Activated CD4-positive, alpha-beta memory T cell treated with anti-CD3 and anti-CD28 coated beads for 36 hours (primary cell): ENCODE measurements at regions of chr9 and their contacts with region 1.

Region 1: GRCh38 chr9:109440797-109441287 is 57.3 kb downstream of the PTPN3 start:
- DNase-seq: peak; percentile 63
- H3K4me3 Mint-ChIP-seq: no peak overlapping the region
- H3K27ac Mint-ChIP-seq: no peak overlapping the region
- H3K4me1 Mint-ChIP-seq: peaks cover 15% of the 10 kb centered on the region
- H3K27me3 Mint-ChIP-seq: peaks cover 8% of the 10 kb centered on the region

Region 2: GRCh38 chr9:109459423-109459822 is 18.6 kb after region 1 on chr9:
- CTCF ChIA-PET with region 1: interaction called, 11 read pairs
- POLR2A ChIA-PET with region 1: no interaction called
- intact Hi-C with region 1: no loop called
- DNase-seq: no peak
- H3K4me3 Mint-ChIP-seq: no peak overlapping the region
- H3K27ac Mint-ChIP-seq: no peak overlapping the region
- H3K4me1 Mint-ChIP-seq: peaks cover 2% of the 10 kb centered on the region
- H3K27me3 Mint-ChIP-seq: peaks cover 23% of the 10 kb centered on the region

Region 3: DNA sequence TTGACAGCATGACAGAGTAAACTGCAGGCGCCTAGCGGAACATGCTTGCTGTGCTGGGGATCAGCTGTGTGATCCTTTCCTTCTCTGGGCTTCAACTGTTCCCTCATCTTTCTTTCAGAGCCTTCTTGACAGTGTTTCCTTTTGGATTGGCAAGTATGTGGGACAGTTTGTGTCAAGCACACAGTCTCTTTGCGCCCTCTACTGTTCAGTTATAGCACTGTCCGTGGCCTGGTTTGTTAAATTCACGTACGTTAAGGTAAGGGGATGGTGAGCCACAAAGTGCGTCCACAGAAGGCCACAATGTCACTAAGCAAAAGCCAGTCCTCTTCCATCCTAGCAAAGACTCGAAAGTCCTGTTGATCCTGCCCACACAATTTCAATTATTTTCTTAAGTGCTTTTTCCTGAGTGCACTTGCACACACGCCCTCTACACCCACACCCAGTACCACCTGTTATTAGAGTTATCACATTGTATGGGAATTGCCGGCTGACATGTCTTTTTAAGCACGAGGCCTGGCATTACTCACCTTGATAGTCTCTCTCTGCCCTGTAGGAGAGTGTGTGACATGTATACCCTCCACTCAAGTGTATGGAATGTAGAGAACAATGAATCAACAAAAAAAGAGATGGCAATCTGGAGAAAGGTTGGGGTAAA is 79.8 kb after region 1 on chr9:
- CTCF ChIA-PET with region 1: interaction called, 3 read pairs
- POLR2A ChIA-PET with region 1: no interaction called
- intact Hi-C with region 1: loop called (anchors 1 kb)
- DNase-seq: peak; percentile 55
- H3K4me3 Mint-ChIP-seq: no peak overlapping the region
- H3K27ac Mint-ChIP-seq: no peak overlapping the region
- H3K4me1 Mint-ChIP-seq: no peaks in the 10 kb centered on the region
- H3K27me3 Mint-ChIP-seq: no peaks in the 10 kb centered on the region

Region 4: GRCh38 chr9:109880277-109881169 is 439.7 kb after region 1 on chr9:
- CTCF ChIA-PET with region 1: no interaction called
- POLR2A ChIA-PET with region 1: no interaction called
- intact Hi-C with region 1: loop called (anchors 10 kb)
- DNase-seq: peak; percentile 46
- H3K4me3 Mint-ChIP-seq: peak overlapping the region; percentile 33
- H3K27ac Mint-ChIP-seq: no peak overlapping the region
- H3K4me1 Mint-ChIP-seq: peaks cover 9% of the 10 kb centered on the region
- H3K27me3 Mint-ChIP-seq: peaks cover 10% of the 10 kb centered on the region